ENCODE measurements at regions of chr19 and their contacts with region 1.

Region 1: GRCh38 chr19:6354098-6354674 is 7.1 kb upstream of the CLPP start:
- DNase-seq: no peak
- H3K4me3 ChIP-seq: no peak overlapping the region
- CTCF ChIP-seq: no peak
- POLR2A ChIP-seq: no peak

Region 2: GRCh38 chr19:4877753-4878490 is 1476.3 kb before region 1 on chr19:
- intact Hi-C with region 1: loop called (anchors 5 kb)
- DNase-seq: no peak
- H3K4me3 ChIP-seq: no peak overlapping the region
- CTCF ChIP-seq: no peak
- POLR2A ChIP-seq: no peak